PC-9 (cell line): ENCODE measurements at regions of chr19 and their contacts with region 1.

Region 1: GRCh38 chr19:36054119-36054732 is at the start of gene THAP8:
- DNase-seq: peak; percentile 94 to 99
- H3K4me3 ChIP-seq: peak within 1 kb of the TSS; percentile 90
- H3K27ac ChIP-seq: peak within 1 kb of the TSS; percentile 69
- H3K4me1 ChIP-seq: peaks cover 12% of the 10 kb centered on the region; the same call in 1 of the 2 replicates
- H3K27me3 ChIP-seq: no peaks in the 10 kb centered on the region
- CTCF ChIP-seq: peak; percentile 31; the same call in 1 of the 2 replicates
- total RNA-seq, gene THAP8: 5.2 and 6.2 TPM in 2 replicates

Region 2: DNA sequence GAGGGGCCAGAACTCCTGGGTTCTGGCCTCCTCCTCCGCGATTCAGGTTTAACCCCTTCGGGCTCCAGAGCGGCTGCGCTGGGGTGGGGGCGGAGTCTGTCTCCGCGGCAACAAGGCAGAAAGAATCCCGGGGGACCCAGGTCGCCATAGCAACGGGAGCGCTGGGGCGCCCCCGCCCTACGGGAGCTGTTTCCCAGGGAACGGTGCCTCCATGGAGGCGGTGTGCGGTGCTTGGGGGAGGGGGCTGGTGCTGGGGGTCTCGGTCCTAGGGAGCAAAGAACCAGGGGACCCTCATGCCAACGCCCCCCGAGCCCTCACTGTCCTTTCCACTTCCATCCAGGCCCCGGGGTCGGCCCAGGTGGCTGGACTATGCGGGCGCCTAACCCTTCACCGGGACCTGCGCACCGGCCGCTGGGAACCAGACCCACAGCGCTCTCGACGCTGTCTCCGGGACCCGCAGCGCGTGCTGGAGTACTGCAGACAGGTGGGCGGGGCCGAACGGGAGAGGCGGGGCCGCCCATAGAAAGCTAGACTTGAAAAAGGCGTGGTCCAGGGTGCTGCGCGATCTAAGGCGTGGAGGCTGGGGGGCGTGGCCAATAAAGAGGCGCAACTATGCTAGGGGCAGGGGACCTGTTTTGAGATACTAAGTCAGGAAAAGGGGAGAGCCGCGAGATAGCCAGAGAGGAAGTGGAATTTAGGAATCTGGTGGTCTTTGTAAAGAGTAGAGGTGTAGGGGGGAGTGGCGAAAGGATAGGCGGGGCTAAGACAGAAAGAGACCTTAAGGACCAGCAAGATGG is 184.7 kb before region 1 on chr19:
- CTCF ChIA-PET with region 1: no interaction called
- POLR2A ChIA-PET with region 1: no interaction called
- intact Hi-C with region 1: no loop called
- DNase-seq: peak in 1 of 2 experiments; percentile 38
- H3K4me3 ChIP-seq: no peak overlapping the region
- H3K27ac ChIP-seq: no peak overlapping the region
- H3K4me1 ChIP-seq: no peaks in the 10 kb centered on the region
- H3K27me3 ChIP-seq: peaks cover 53% of the 10 kb centered on the region
- CTCF ChIP-seq: no peak

Region 3: GRCh38 chr19:36009220-36009619 is 45.0 kb before region 1 on chr19:
- CTCF ChIA-PET with region 1: no interaction called
- POLR2A ChIA-PET with region 1: interaction called, 7 read pairs
- intact Hi-C with region 1: loop called (anchors 1 kb)
- DNase-seq: peak in 1 of 2 experiments; percentile 65
- H3K4me3 ChIP-seq: peak overlapping the region; percentile 59; the same call in 1 of the 2 replicates
- H3K27ac ChIP-seq: no peak overlapping the region
- H3K4me1 ChIP-seq: no peaks in the 10 kb centered on the region
- H3K27me3 ChIP-seq: no peaks in the 10 kb centered on the region
- CTCF ChIP-seq: no peak

Region 4: GRCh38 chr19:36014029-36014924 is 39.9 kb before region 1 on chr19 and contains the start of gene ALKBH6:
- CTCF ChIA-PET with region 1: no interaction called
- POLR2A ChIA-PET with region 1: interaction called, 7 read pairs
- intact Hi-C with region 1: loop called (anchors 1 kb)
- DNase-seq: peak; percentile 98 to 99
- H3K4me3 ChIP-seq: peak within 1 kb of the TSS; percentile 70
- H3K27ac ChIP-seq: no peak within 1 kb of the TSS
- H3K4me1 ChIP-seq: peaks cover 7% of the 10 kb centered on the region
- H3K27me3 ChIP-seq: no peaks in the 10 kb centered on the region
- CTCF ChIP-seq: no peak
- total RNA-seq, gene ALKBH6: 48.2 and 55.1 TPM in 2 replicates

Region 5: DNA sequence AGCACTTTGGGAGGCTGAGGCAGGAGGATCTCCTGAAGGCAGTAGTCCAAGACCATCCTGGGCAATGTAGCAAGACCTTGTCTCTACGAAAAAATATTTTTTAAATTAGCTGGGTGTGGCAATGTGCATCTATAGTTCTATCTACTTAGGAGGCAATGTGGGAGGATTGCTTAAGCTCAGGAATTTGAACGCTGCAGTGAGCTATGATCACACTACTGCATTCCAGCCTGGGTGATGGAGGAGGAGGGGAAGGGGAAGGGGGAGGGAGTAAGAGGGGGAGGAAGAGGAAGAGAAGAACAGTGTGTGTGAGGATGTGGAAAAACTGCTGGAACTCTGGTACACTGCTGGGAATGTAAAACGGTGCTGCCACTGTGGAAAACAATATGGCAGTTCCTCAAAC is 12.4 kb before region 1 on chr19:
- CTCF ChIA-PET with region 1: interaction called, 3 read pairs
- POLR2A ChIA-PET with region 1: interaction called, 38 read pairs
- intact Hi-C with region 1: no loop called
- DNase-seq: peak; percentile 36 to 61
- H3K4me3 ChIP-seq: no peak overlapping the region
- H3K27ac ChIP-seq: no peak overlapping the region
- H3K4me1 ChIP-seq: peaks cover 8% of the 10 kb centered on the region
- H3K27me3 ChIP-seq: no peaks in the 10 kb centered on the region
- CTCF ChIP-seq: no peak

Region 6: DNA sequence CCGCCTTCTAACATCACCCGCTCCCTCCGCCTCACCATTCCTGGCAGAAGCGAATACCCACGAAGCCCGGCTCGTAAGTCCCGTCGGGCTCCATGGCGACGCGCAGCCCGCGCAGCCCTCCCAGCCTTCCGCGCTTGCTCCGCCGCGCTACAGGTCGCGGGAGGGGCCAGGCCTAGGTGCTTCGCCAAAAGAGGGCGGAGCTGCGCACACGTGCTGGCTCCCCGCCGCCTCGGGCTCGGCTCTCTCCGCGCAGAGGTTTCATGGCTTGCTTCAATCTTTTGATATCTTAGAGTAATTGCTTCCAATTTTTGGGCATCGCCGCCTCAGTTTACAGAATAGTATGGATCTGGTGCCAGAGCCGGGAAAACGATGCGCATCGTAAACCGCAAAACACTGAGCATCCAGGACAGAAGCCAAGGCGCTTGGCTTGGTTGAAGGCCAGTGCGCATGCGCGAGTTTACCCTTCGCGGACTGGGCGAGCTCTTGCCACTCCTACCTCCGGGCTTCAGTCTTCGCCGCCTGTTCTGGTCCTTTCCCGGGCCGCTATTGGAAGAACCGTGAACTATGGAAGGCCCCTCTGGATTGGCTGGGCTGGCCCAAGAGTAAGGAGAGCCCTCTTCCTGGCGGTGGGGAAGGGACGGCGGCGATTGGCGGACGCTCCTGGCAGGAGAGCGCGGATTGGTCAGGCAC is 60.7 kb after region 1 on chr19 and contains the start of gene POLR2I:
- CTCF ChIA-PET with region 1: no interaction called
- POLR2A ChIA-PET with region 1: no interaction called
- intact Hi-C with region 1: loop called (anchors 10 kb)
- DNase-seq: peak; percentile 99
- H3K4me3 ChIP-seq: peak within 1 kb of the TSS; percentile 100
- H3K27ac ChIP-seq: peak within 1 kb of the TSS; percentile 67
- H3K4me1 ChIP-seq: peaks cover 12% of the 10 kb centered on the region
- H3K27me3 ChIP-seq: no peaks in the 10 kb centered on the region
- CTCF ChIP-seq: no peak
- total RNA-seq, gene POLR2I: 92.2 and 131 TPM in 2 replicates